ENCODE measurements at regions of chr14 and their contacts with region 1.

Region 1: DNA sequence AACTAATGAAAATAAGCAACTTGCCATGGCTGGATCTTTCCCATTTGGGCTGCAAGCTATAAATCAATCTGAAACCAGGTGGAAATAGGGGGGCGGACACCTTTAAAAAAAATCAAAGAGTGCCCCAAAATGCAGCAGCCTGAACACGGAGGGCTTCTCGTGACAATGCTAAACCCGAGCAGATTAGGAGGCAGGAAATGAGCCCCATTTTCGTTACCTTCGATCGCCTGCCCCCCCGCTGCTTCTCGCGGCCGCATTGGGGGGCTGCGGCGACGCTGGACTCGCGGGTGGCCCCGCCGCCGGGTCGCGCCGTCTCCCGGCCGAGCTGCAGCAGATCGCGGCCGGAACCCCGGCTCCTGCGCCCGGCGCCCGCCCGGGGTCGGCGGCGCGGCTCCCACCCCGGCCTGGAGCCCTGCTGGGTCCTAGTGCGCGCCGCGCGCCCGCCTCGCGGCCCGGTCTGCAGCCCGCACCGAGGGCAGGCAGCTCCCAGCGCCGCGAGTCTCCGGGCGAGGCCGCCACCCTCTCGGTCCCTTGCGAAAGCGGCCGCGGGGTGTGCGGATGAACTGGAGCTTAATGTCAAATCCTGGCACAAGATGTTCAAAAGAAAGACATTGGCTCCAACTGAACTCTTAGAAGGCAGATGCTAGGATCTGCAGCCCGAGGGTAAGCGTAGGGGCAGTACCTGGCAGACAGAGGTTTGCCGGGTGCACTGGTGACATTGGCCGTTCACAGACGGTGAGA is 201.9 kb upstream of the FOXN3 start:
- DNase-seq: peak; percentile 74
- ATAC-seq: peak; percentile 33
- H3K4me3 Mint-ChIP-seq: peak overlapping the region; percentile 90
- H3K27ac Mint-ChIP-seq: peak overlapping the region; percentile 98
- H3K4me1 Mint-ChIP-seq: peaks cover 65% of the 10 kb centered on the region
- H3K27me3 Mint-ChIP-seq: no peaks in the 10 kb centered on the region
- CTCF ChIP-seq: no peak

Region 2: DNA sequence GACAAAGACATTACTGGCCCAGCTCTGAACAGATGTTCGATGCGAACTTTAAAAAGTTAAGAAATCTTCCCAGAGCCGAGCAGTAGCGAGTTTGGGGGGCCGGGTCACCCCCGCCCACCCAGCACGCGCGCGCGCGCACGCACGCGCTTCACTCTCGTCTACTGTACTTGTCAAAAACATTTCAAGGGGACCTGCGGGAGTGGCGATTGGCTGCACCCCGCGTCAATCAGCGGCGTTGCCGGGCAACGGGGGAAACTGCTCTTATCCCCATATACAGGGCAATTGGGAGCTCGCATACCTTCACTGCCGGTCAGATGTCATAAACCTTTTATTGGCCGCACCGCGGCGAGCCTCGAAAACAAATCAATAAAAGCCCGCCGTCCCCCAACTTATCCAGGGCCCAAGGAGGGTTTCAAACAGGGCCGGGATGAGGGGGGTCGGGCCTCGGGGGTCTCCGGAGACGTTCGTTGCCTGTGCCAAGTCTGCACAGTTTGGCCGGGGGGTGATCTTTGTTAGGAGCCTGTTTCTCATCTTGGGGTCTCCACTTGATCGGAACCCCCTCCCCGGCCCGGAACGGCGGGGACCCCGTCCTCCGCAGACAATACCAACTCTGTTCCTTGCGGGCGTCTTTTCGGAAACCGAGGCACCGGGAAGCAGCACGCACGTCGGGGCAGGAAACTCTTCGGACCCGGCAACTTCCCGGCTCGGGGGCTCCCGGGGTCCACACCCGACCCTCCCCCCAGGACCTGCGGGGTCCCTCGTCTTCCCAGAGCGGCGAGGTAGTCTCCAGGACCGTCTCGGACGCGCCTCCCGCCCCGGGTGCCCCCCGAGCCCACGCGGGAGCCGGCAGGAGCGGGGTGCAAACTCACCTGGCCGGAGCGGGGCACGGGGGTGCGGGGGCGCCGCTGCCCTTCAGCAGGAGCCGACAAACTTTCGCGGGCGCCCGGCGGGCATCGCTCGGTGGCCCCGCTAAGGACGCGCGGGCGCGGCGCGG is 202.7 kb before region 1 on chr14:
- CTCF ChIA-PET with region 1: interaction called, 4 read pairs
- POLR2A ChIA-PET with region 1: interaction called, 9 read pairs
- intact Hi-C with region 1: loop called (anchors 5 kb)
- DNase-seq: peak; percentile 99
- ATAC-seq: peak; percentile 75
- H3K4me3 Mint-ChIP-seq: peak overlapping the region; percentile 87
- H3K27ac Mint-ChIP-seq: peak overlapping the region; percentile 90
- H3K4me1 Mint-ChIP-seq: peaks cover 53% of the 10 kb centered on the region
- H3K27me3 Mint-ChIP-seq: no peaks in the 10 kb centered on the region
- CTCF ChIP-seq: no peak

Region 3: GRCh38 chr14:89578156-89578555 is 40.8 kb before region 1 on chr14:
- CTCF ChIA-PET with region 1: no interaction called
- POLR2A ChIA-PET with region 1: no interaction called
- intact Hi-C with region 1: no loop called
- DNase-seq: no peak
- ATAC-seq: no peak
- H3K4me3 Mint-ChIP-seq: no peak overlapping the region
- H3K27ac Mint-ChIP-seq: no peak overlapping the region
- H3K4me1 Mint-ChIP-seq: peaks cover 33% of the 10 kb centered on the region
- H3K27me3 Mint-ChIP-seq: no peaks in the 10 kb centered on the region
- CTCF ChIP-seq: no peak

Region 4: DNA sequence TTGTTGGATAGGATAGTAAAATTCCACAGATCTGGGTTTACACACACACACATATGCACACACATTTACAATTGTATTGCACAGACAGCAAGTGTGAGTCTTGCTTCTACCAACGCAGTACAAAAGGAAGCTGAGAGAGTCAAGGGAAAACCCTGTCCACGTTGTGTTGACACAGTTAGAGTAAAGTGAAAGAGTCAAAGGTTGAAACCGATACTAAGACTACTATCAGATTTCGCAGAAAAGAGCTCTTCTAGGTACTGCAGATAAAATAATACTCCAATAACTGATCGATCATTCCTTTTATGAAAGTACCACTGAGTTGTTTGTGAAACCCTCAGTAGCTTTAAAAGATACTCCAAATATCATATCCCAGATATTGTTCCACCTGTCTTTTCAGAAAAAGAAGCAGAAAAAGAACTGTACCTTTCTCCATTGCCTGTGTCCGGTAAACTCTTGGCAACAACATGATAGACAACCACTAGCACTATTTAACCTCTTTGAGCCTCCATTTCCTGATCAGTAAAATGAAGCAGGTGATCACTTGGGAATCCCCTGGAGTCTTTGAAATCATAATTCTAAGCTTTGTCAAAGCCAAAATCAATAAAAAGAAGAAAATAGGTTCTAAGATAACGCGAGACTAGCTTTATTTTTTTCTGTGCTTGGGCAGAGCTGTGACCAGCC is 22.7 kb after region 1 on chr14:
- CTCF ChIA-PET with region 1: interaction called, 9 read pairs
- POLR2A ChIA-PET with region 1: interaction called, 34 read pairs
- intact Hi-C with region 1: no loop called
- DNase-seq: peak; percentile 59
- ATAC-seq: peak; percentile 91
- H3K4me3 Mint-ChIP-seq: peak overlapping the region; percentile 60
- H3K27ac Mint-ChIP-seq: peak overlapping the region; percentile 96
- H3K4me1 Mint-ChIP-seq: peaks cover 68% of the 10 kb centered on the region
- H3K27me3 Mint-ChIP-seq: no peaks in the 10 kb centered on the region
- CTCF ChIP-seq: no peak

Region 5: GRCh38 chr14:89690139-89690538 is 71.2 kb after region 1 on chr14:
- CTCF ChIA-PET with region 1: no interaction called
- POLR2A ChIA-PET with region 1: no interaction called
- intact Hi-C with region 1: no loop called
- DNase-seq: no peak
- ATAC-seq: no peak
- H3K4me3 Mint-ChIP-seq: no peak overlapping the region
- H3K27ac Mint-ChIP-seq: no peak overlapping the region
- H3K4me1 Mint-ChIP-seq: peaks cover 12% of the 10 kb centered on the region
- H3K27me3 Mint-ChIP-seq: no peaks in the 10 kb centered on the region
- CTCF ChIP-seq: no peak

Region 6: DNA sequence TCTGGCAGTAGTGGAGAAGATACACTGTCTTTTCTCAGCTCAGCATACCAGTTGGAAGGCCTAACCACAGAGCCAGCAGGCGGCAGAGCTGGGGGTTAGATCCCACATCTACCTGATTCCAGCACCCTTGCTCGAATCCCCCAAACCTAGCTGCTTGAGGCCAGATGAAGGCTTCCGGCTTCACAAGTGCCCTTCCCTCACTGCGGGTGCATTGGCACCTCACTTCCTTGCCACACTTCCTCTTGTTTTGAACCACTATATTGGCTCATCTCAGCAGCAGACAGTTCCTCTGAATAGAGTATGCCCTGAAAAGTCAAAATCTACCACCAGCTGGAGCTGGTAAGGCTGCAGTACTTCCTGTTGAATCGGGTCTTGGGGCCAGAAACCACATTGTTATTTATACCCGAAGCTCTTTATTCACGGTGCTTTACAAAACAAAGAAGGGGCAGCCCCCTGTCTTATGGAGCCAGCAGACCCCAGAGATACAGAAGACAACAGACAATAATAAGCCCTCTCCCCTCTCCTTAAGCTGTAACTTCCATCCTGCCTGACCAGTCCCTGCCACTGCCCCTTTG is 101.8 kb after region 1 on chr14:
- CTCF ChIA-PET with region 1: interaction called, 3 read pairs
- POLR2A ChIA-PET with region 1: interaction called, 28 read pairs
- intact Hi-C with region 1: loop called (anchors 5 kb)
- DNase-seq: peak; percentile 86
- ATAC-seq: peak; percentile 82
- H3K4me3 Mint-ChIP-seq: peak overlapping the region; percentile 52
- H3K27ac Mint-ChIP-seq: peak overlapping the region; percentile 100
- H3K4me1 Mint-ChIP-seq: peaks cover 80% of the 10 kb centered on the region
- H3K27me3 Mint-ChIP-seq: no peaks in the 10 kb centered on the region
- CTCF ChIP-seq: no peak

Region 7: DNA sequence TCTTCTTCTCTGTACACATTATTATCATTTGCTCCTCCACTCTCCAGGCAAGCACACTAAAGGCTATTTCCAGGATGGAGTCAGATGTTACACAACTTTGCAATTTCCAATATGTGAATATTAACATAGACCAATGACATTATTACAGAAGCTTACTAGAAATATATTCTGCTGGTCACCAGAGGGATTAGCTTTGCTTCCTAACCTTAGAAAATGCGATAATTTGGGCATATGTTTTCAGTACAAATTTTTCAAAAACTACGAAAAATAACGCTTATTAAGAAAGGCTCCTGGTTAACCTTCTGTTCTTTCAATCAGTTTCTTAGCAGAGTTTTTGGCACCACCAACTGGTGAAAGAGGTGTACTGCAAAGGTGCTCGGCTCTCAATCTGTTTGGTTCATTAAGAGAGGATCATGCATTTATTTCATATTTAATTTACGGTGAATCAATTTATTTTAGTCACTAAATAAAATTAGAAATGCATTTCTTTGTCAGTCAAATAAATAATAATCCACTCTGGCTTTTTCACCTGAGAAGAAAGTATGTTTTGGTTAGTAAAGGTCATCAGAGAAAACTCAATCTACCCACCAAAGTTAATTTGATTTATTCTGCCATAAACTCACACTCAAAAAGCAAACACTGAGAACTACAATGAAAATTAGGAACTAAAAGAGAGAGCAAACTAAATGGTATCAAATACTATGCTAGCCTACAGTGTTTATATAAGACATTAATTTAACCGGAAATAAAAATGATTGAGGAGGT is 296.3 kb after region 1 on chr14:
- CTCF ChIA-PET with region 1: interaction called, 3 read pairs
- POLR2A ChIA-PET with region 1: no interaction called
- intact Hi-C with region 1: loop called (anchors 5 kb)
- DNase-seq: peak; percentile 77
- ATAC-seq: peak; percentile 66
- H3K4me3 Mint-ChIP-seq: no peak overlapping the region
- H3K27ac Mint-ChIP-seq: no peak overlapping the region
- H3K4me1 Mint-ChIP-seq: peaks cover 3% of the 10 kb centered on the region
- H3K27me3 Mint-ChIP-seq: peaks cover 10% of the 10 kb centered on the region
- CTCF ChIP-seq: peak; percentile 98

Measured in activated CD8-positive, alpha-beta T cell treated with anti-CD3 and anti-CD28 coated beads for 36 hours (primary cell).